Right ventricle myocardium superior (tissue), 1 donor: ENCODE measurements at regions of chr13 and their contacts with region 1.

Region 1: DNA sequence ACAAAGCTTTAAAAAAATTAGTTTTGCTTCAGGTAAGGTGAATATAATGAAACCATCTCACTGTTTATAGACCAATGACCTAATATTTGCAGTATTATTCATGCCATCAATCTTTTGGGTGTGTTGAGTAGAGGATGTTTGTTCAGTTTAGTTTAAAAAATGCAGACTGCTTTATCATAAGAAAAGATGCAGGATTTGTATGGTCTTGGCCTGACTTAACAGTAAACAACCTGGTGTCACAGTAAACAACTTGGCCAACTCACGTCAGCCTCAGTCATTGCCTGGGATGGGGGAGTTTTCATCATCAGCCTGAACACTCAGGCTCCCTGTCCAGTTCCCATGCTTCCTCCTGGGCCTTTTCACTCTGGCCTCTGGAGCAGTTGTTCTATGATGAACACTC is 55.1 kb downstream of the LMO7 start:
- DNase-seq: no peak
- ATAC-seq: no peak

Region 2: GRCh38 chr13:75010941-75011340 is 680.2 kb before region 1 on chr13:
- intact Hi-C with region 1: no loop called
- DNase-seq: no peak
- ATAC-seq: no peak

Region 3: DNA sequence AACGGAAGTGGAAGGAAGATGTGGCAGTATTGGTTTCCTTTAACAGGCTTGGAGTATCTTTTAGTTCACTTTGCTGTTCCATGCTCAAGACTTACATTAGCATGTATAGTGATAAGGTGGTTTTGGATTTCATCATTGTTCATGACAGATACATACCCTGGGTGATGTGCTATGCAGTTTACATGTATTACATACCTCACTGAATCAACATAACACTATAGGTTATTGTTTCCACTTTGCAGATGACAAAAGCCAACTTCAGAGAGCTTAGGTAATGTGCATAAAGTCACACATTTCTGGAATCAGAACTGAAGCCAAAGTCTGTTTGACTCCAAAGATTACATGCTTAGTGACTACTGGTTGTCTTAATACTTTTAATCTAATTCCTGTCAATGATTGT is 160.6 kb before region 1 on chr13:
- intact Hi-C with region 1: no loop called
- DNase-seq: no peak
- ATAC-seq: peak; percentile 25

Region 4: GRCh38 chr13:75587679-75588078 is 103.5 kb before region 1 on chr13:
- intact Hi-C with region 1: no loop called
- DNase-seq: no peak
- ATAC-seq: no peak

Region 5: GRCh38 chr13:75812751-75813181 is 121.6 kb after region 1 on chr13:
- intact Hi-C with region 1: loop called (anchors 10 kb)
- DNase-seq: no peak
- ATAC-seq: peak; percentile 66

Region 6: DNA sequence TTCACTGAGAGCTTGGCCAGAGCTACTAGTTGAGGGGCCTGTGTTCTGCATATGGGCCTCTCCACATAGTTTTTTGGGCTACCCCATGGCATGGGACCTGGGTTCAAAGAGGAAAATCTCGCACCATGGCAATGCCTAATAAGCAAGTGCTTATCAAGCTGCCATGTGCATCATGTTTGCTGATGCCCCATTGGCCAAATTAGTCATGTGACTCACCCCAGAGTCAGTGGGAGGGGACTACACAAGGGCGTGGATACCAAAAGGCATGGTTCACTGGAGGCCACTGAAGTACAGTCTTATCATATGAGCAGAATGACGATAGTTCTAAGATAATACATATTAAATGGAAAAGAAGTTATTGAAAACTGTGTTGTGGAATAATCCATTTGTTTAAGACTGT is 159.7 kb after region 1 on chr13:
- intact Hi-C with region 1: loop called (anchors 10 kb)
- DNase-seq: no peak
- ATAC-seq: no peak